Naive thymus-derived CD8-positive, alpha-beta T cell (primary cell): ENCODE measurements at regions of chr17 and their contacts with region 1.

Region 1: DNA sequence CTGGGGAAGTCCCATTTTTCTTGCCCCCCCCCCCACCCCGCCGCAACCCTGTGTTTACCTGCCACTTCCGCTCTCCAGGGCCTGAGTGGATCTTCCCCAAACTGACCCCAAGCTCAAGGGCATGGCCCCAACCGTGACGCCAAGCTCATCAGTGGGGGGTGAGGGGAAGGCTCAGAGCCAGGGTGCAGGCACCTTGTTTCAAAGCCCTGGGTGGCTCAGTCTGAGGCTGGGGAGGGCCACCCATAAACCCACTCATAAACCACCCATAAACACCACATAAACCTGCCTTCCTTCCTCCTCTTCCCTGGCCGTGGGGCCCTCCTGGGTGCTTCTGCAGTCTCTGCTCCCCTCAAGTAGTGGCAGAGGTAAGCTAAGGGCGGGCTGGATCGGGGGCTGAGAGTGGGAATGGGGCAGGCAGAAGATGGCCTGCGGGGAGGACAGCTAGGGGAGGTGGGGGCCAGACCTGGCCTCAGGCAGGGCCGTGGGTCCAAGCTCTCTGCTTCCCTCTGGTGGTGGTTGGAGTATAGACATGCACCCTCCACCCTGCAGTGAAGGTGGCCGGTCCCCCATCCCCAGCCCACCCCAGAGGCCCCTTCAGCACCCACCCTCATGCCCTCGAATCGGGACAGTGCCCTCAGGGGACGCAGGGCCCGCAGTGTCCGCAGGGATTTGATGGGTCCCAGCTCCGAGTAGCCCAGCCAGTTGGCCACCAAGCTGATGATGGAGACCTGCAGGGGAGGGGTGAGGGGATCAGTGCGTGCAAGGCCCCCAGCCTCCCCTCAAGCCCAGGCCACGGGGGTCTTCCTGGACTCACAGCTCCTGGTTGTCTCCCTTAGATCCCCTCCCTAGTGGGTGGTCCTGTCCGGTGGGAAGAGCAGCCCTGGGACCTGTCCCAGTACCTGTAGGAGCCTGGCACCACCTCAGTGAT is 14.6 kb upstream of the CD79B start:
- DNase-seq: peak; percentile 16 to 72 (median 51)
- ATAC-seq: peak; percentile 86 to 88
- H3K4me3 Mint-ChIP-seq: peak overlapping the region; percentile 61 to 82 (median 74)
- H3K27ac Mint-ChIP-seq: peak overlapping the region in 6 of 10 donors; percentile 9 to 82 (median 64)
- H3K4me1 Mint-ChIP-seq: peaks cover 14 to 31% (median 23%) of the 10 kb centered on the region in 4 donors
- H3K27me3 Mint-ChIP-seq: peaks cover 0 to 1% (median 0%) of the 10 kb centered on the region in 5 donors

Region 2: GRCh38 chr17:63919311-63919723 is 27.4 kb before region 1 on chr17:
- POLR2A ChIA-PET with region 1: interaction called, 13 read pairs
- DNase-seq: peak; percentile 48 to 83 (median 74)
- ATAC-seq: peak; percentile 92 to 96
- H3K4me3 Mint-ChIP-seq: peak overlapping the region in 1 of 10 donors; percentile 66
- H3K27ac Mint-ChIP-seq: peak overlapping the region in 7 of 10 donors; percentile 12 to 87 (median 43)
- H3K4me1 Mint-ChIP-seq: peaks cover 4 to 48% (median 9%) of the 10 kb centered on the region in 4 donors
- H3K27me3 Mint-ChIP-seq: peaks cover 0 to 5% (median 0%) of the 10 kb centered on the region in 5 donors

Region 3: GRCh38 chr17:63931099-63931561 is 15.6 kb before region 1 on chr17:
- POLR2A ChIA-PET with region 1: interaction called, 47 read pairs
- DNase-seq: peak in 9 of 10 donors; percentile 28 to 79 (median 51)
- ATAC-seq: peak; percentile 76 to 78
- H3K4me3 Mint-ChIP-seq: peak overlapping the region; percentile 87 to 94 (median 93)
- H3K27ac Mint-ChIP-seq: peak overlapping the region; percentile 53 to 94 (median 92)
- H3K4me1 Mint-ChIP-seq: peaks cover 15 to 56% (median 29%) of the 10 kb centered on the region in 4 donors
- H3K27me3 Mint-ChIP-seq: no peaks in the 10 kb centered on the region

Region 4: DNA sequence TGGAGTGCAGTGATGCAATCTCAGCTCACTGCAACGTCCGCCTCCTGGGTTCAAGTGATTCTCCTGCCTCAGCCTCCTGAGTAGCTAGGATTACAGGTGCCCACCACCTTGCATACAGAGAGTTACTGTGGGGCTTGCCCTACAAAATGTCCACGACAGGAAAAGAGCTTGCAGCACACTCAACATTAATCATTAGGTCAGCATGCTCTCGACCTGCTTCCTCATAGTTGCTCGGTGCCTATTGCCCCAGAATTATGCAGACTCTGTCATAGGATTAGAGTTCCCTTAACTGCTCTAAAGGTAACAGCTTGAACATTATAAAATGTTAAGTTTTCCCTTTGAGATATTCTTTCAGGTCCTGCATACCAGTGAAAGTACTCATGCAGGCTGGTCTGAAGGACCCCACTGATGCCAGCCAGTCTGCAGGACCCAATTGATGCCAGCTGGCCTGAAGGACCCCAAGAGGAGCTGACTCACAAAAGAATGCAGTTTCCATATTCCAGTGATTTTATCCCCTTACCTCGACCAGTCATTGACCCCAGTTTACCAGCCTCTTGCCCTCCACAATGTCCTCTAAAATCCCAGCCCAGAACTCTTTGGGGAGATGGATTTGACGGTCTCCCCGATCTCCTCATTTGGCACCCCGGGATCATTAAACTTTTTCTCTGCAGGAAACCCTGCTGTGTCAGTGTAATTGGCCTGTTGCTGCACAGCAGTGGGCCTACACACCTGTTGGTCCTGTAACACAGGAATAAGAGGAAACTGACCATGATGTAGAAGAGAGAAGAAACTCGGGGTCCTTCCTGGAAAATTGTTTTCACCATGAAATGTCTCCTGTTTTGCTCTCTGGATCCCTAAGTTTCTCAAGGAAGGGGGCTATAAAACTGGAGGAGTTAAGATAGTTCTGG is 63.0 kb after region 1 on chr17:
- POLR2A ChIA-PET with region 1: no interaction called
- DNase-seq: no peak
- ATAC-seq: no peak
- H3K4me3 Mint-ChIP-seq: peak overlapping the region in 8 of 10 donors; percentile 8 to 63 (median 45)
- H3K27ac Mint-ChIP-seq: peak overlapping the region; percentile 43 to 97 (median 78)
- H3K4me1 Mint-ChIP-seq: peaks cover 37 to 90% (median 82%) of the 10 kb centered on the region in 4 donors
- H3K27me3 Mint-ChIP-seq: no peaks in the 10 kb centered on the region